Calu3 (cell line): ENCODE measurements at regions of chr3 and their contacts with region 1.

Region 1: DNA sequence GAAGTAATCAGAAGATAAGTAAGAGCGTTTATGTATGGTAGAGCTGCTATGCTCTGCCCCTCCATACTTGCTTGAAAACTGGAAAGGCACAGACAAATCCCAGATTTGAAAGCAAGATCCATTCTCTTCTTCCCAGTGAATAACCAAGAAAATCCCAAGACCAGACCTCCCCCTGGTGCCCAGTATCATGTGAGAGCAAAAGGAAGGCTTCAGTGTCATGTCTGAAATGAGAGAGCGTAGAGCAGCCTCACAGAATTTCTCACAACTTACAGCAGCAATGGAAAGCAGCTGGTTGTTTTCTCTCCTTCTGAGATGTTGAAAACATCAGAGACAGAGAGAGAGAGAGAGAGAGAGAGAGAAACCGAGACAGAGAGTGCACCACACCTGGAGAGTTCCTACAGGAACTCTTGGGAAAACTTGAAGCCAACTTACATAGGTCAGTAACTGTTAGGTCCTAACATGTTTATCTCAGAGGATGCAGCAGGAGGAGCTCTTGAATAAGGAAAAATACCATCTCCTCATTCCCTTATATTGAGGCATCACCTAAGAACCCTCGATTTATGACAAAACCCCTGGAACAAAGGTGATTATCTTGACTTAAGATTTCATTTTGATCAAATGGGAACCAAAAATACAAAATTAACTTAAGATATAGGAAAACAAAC is 273.3 kb downstream of the NSUN3 start:
- DNase-seq: peak; percentile 21
- H3K4me3 Mint-ChIP-seq: no peak overlapping the region
- H3K27ac Mint-ChIP-seq: no peak overlapping the region
- H3K4me1 Mint-ChIP-seq: peaks cover 10% of the 10 kb centered on the region
- H3K27me3 Mint-ChIP-seq: no peaks in the 10 kb centered on the region
- CTCF ChIP-seq: no peak

Region 2: GRCh38 chr3:94106268-94106667 is 229.9 kb before region 1 on chr3:
- CTCF ChIA-PET with region 1: no interaction called
- intact Hi-C with region 1: no loop called
- DNase-seq: no peak
- H3K4me3 Mint-ChIP-seq: no peak overlapping the region
- H3K27ac Mint-ChIP-seq: no peak overlapping the region
- H3K4me1 Mint-ChIP-seq: no peaks in the 10 kb centered on the region
- H3K27me3 Mint-ChIP-seq: no peaks in the 10 kb centered on the region
- CTCF ChIP-seq: no peak

Region 3: GRCh38 chr3:94249585-94249984 is 86.6 kb before region 1 on chr3:
- CTCF ChIA-PET with region 1: interaction called, 3 read pairs
- intact Hi-C with region 1: loop called (anchors 1 kb)
- DNase-seq: peak; percentile 78
- H3K4me3 Mint-ChIP-seq: no peak overlapping the region
- H3K27ac Mint-ChIP-seq: no peak overlapping the region
- H3K4me1 Mint-ChIP-seq: no peaks in the 10 kb centered on the region
- H3K27me3 Mint-ChIP-seq: no peaks in the 10 kb centered on the region
- CTCF ChIP-seq: peak; percentile 64

Region 4: GRCh38 chr3:94310341-94311135 is 25.6 kb before region 1 on chr3:
- CTCF ChIA-PET with region 1: no interaction called
- intact Hi-C with region 1: loop called (anchors 1 kb)
- DNase-seq: no peak
- H3K4me3 Mint-ChIP-seq: no peak overlapping the region
- H3K27ac Mint-ChIP-seq: no peak overlapping the region
- H3K4me1 Mint-ChIP-seq: no peaks in the 10 kb centered on the region
- H3K27me3 Mint-ChIP-seq: no peaks in the 10 kb centered on the region
- CTCF ChIP-seq: no peak

Region 5: GRCh38 chr3:94522488-94522887 is 186.3 kb after region 1 on chr3:
- CTCF ChIA-PET with region 1: no interaction called
- intact Hi-C with region 1: loop called (anchors 2 kb)
- DNase-seq: peak; percentile 11
- H3K4me3 Mint-ChIP-seq: no peak overlapping the region
- H3K27ac Mint-ChIP-seq: no peak overlapping the region
- H3K4me1 Mint-ChIP-seq: no peaks in the 10 kb centered on the region
- H3K27me3 Mint-ChIP-seq: no peaks in the 10 kb centered on the region
- CTCF ChIP-seq: peak; percentile 29